Transverse colon (tissue), 4 donors: ENCODE measurements at regions of chr7 and their contacts with region 1.

Region 1: GRCh38 chr7:127337581-127337980 is 54.9 kb downstream of the ZNF800 start:
- DNase-seq: peak; percentile 77
- H3K4me3 ChIP-seq: no peak overlapping the region
- H3K27ac ChIP-seq: peak overlapping the region in 2 of 4 donors; percentile 36 to 46
- H3K4me1 ChIP-seq: peaks cover 0 to 13% (median 0%) of the 10 kb centered on the region in 4 donors
- H3K27me3 ChIP-seq: no peaks in the 10 kb centered on the region
- CTCF ChIP-seq: no peak
- EP300 ChIP-seq: no peak
- POLR2A ChIP-seq: no peak

Region 2: DNA sequence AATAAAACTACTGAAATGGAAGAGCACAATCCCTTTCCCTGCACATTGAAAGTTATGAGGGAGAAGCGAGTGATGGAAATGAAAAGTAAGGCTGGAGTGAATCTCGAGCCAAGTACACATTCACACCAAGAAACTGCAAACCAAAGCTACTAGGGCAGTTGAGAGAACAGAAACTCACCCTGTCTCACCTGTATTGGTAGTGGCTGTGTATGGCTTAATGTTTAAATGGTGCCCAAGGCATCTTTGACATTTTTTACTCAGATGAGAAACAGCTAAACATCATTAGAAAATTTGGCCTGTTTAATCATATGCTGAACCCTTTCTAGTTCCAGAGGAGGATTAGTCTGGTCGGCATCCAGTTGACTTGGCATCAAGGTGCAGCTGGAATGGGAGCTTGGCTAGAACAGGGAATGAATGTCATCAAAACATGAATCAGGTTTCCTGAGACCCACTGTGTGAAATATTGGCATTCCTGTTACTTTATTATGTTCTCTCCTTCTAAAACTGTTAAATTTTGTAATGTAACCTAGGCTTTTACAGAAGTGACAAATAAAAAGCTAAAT is 925.7 kb before region 1 on chr7:
- in situ Hi-C with region 1: no loop called
- intact Hi-C with region 1: no loop called
- DNase-seq: no peak
- H3K4me3 ChIP-seq: no peak overlapping the region
- H3K27ac ChIP-seq: no peak overlapping the region
- H3K4me1 ChIP-seq: no peaks in the 10 kb centered on the region
- H3K27me3 ChIP-seq: no peaks in the 10 kb centered on the region
- CTCF ChIP-seq: no peak
- EP300 ChIP-seq: no peak
- POLR2A ChIP-seq: no peak

Region 3: DNA sequence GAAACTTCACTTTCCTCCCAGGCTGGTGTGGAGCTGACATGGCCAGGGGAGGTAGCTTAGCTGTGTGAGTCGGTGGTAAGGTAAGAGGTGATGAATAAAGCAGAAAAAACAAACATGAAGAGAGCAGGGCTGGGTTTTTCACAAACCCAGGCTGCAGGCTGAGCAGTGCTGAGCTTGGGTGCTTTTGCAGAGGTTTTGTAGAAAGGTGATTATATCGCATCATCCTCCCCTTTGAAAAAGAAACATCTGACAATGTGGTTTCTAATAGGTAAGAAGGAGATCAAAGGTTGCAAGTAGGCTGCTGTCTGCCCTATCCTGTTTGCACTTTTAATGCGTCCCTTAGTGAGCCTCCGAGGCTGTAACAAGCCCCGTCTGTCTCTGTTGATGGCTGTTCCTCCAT is 15.2 kb before region 1 on chr7:
- in situ Hi-C with region 1: no loop called
- intact Hi-C with region 1: loop called (anchors 1 kb)
- DNase-seq: no peak
- H3K4me3 ChIP-seq: no peak overlapping the region
- H3K27ac ChIP-seq: no peak overlapping the region
- H3K4me1 ChIP-seq: no peaks in the 10 kb centered on the region
- H3K27me3 ChIP-seq: no peaks in the 10 kb centered on the region
- CTCF ChIP-seq: no peak
- EP300 ChIP-seq: no peak
- POLR2A ChIP-seq: no peak